Activated CD4-positive, alpha-beta T cell treated with anti-CD3 and anti-CD28 coated beads, Interleukin-2, amount 10 ng/mL, durations not matched to agents 24 days and 14 days (primary cell): ENCODE measurements at regions of chr18 and their contacts with region 1.

Region 1: GRCh38 chr18:12376718-12377555 is at the start of gene AFG3L2:
- DNase-seq: peak; percentile 100
- H3K4me3 Mint-ChIP-seq: peak within 1 kb of the TSS; percentile 94
- H3K27ac Mint-ChIP-seq: peak within 1 kb of the TSS; percentile 96
- H3K4me1 Mint-ChIP-seq: peaks cover 39% of the 10 kb centered on the region
- H3K27me3 Mint-ChIP-seq: peaks cover 9% of the 10 kb centered on the region
- total RNA-seq, gene AFG3L2: 71.8 and 74.6 TPM in 2 replicates

Region 2: DNA sequence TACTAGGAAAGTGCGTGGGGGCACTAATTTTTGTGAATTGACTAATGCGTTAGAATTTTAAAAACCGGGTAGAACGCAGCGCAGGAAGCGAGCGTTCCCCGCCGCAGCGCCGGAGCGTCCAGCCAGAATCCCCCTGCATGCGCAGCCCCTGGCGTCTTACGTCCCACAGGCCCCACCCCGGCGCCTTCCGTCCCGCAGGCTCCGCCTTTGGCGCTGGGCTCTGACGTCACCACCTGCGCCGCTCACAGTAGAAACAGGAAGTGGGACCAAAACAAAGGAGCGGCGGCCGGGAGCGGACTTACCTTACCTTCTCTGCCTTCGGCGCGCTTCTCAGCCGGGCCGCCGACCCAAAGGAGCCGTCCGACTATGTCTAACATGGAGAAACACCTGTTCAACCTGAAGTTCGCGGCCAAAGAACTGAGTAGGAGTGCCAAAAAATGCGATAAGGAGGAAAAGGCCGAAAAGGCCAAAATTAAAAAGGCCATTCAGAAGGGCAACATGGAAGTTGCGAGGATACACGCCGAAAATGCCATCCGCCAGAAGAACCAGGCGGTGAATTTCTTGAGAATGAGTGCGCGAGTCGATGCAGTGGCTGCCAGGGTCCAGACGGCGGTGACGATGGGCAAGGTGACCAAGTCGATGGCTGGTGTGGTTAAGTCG is 525.7 kb before region 1 on chr18 and contains the start of gene CHMP1B:
- intact Hi-C with region 1: loop called (anchors 5 kb)
- DNase-seq: peak; percentile 99
- H3K4me3 Mint-ChIP-seq: peak within 1 kb of the TSS; percentile 99
- H3K27ac Mint-ChIP-seq: peak within 1 kb of the TSS; percentile 100
- H3K4me1 Mint-ChIP-seq: peaks cover 24% of the 10 kb centered on the region
- H3K27me3 Mint-ChIP-seq: peaks cover 2% of the 10 kb centered on the region
- total RNA-seq, gene CHMP1B: 22.7 and 24.4 TPM in 2 replicates

Region 3: DNA sequence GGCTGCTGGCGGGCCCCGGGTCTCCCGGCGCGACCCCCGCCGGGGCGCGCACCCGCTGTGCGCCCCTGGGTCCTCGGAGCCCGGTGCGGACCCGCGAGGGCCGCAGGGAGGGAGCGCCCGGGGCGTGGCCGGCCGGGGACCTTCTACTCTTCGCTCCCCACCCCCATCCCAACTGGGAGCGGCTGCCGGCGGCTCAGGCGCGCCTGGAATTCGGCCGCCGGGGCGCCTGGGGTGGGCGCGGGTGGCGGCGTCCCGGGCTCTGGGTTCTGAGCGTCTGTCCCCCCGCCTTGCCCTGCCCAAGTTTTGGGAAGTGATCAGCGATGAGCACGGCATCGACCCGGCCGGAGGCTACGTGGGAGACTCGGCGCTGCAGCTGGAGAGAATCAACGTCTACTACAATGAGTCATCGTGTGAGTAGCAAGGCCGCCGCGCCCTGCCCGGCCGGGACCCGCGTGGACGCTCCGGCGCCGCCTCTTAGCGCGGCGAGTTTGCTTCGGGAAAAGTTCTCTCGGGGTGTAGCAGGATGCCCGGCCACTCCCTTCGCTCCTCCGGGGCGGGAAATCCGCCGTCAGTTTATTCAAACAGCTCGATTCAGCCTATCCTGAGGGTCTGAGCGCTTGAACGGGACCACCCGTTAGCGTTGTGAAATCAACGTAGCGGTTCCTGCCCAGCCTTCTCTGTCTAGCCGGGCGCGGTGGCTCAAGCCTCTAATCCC is 68.4 kb before region 1 on chr18:
- intact Hi-C with region 1: loop called (anchors 1 kb)
- DNase-seq: peak; percentile 79
- H3K4me3 Mint-ChIP-seq: peak overlapping the region; percentile 82
- H3K27ac Mint-ChIP-seq: peak overlapping the region; percentile 60
- H3K4me1 Mint-ChIP-seq: peaks cover 16% of the 10 kb centered on the region
- H3K27me3 Mint-ChIP-seq: peaks cover 35% of the 10 kb centered on the region

Region 4: GRCh38 chr18:12657684-12658425 is 280.9 kb after region 1 on chr18 and contains the start of gene SPIRE1:
- intact Hi-C with region 1: loop called (anchors 1 kb)
- DNase-seq: peak; percentile 86
- H3K4me3 Mint-ChIP-seq: peak within 1 kb of the TSS; percentile 86
- H3K27ac Mint-ChIP-seq: peak within 1 kb of the TSS; percentile 77
- H3K4me1 Mint-ChIP-seq: peaks cover 25% of the 10 kb centered on the region
- H3K27me3 Mint-ChIP-seq: peaks cover 23% of the 10 kb centered on the region
- total RNA-seq, gene SPIRE1: 7.6 and 8.4 TPM in 2 replicates

Region 5: DNA sequence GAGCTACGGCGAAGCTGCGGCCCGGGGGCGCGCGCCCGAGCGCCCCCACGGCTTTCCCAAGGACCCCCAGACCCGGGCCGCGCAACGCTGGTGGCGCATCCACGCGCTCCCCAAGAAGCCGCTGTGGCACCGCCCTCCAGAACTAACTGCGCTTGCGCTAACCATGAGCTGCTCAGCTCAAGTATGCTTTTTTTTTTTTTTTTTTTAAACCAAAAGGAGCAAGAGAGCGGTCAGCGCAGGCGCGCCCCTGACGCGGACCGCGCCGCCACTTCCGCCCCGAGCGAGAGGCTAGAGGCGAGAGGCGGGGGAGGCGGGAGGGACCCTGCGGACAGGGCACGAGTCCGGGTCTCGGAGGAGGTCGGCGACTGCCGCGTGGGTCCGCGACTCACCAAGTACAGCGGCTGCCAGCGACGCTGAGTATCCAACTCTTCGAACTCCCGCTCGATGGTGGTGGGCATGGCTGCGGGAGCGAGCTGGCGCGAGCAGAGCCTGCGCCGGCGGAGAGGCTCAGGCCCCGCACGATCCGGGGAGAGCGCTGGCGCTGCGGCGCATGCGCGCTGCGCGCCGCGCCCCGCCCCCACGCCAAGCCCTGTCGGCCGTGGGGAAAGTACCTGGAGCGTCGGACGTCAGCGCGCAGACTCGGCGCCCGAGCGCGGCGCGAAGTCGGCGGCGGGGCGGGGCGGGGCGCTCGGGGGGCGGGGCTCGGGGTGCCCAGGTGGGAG is 506.9 kb after region 1 on chr18 and contains the start of gene PTPN2:
- intact Hi-C with region 1: loop called (anchors 1 kb)
- DNase-seq: peak; percentile 97
- H3K4me3 Mint-ChIP-seq: peak within 1 kb of the TSS; percentile 90
- H3K27ac Mint-ChIP-seq: peak within 1 kb of the TSS; percentile 94
- H3K4me1 Mint-ChIP-seq: peaks cover 57% of the 10 kb centered on the region
- H3K27me3 Mint-ChIP-seq: no peaks in the 10 kb centered on the region
- total RNA-seq, gene PTPN2: 68.8 and 72.5 TPM in 2 replicates

Region 6: DNA sequence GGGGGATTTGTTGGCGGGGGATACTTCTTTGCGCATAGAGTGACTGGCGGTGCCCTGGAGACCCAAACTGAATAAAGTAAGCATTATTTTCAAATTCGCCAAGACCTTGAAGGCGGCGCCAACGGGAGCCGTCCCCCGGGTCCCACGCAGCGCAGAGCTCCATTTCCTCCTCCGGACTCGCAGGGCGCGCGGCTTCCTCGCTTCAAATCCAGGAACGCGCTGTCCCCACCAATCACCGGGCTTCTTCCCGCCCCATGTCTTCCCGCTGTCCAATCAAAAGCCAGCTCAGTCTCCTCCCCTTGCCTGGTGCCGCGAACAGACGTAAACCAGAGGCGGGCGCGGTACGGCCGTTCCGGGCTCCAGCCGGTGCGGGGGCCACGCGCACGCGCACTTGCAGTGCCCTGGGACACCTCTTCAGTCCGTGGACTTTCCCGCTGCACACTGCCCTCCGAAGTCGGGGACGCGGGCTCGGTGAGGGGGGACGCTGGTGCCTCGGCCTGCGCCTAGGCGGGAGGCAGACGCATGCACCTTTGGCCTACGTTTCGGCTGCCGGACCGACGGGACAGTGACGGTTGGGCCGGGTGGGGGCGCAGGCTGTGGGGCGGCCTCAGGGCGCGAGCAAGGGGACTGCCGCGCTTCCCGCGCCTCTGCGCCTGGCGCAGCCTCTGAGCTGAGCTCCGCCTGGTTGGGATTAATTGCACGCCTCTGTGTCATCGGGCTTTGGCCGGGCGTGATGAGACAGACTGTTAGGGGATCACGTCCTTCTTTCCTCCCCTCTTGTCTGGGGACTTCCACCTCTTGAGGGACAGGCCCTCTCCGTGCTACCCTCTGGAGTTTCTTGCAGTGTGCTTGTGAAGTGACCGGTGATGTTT is 614.3 kb after region 1 on chr18 and contains the start of gene CEP192:
- intact Hi-C with region 1: loop called (anchors 1 kb)
- DNase-seq: peak; percentile 99
- H3K4me3 Mint-ChIP-seq: peak within 1 kb of the TSS; percentile 94
- H3K27ac Mint-ChIP-seq: peak within 1 kb of the TSS; percentile 92
- H3K4me1 Mint-ChIP-seq: peaks cover 16% of the 10 kb centered on the region
- H3K27me3 Mint-ChIP-seq: no peaks in the 10 kb centered on the region
- total RNA-seq, gene CEP192: 31.4 and 34.7 TPM in 2 replicates